ENCODE measurements at regions of chr6 and their contacts with region 1.

Region 1: DNA sequence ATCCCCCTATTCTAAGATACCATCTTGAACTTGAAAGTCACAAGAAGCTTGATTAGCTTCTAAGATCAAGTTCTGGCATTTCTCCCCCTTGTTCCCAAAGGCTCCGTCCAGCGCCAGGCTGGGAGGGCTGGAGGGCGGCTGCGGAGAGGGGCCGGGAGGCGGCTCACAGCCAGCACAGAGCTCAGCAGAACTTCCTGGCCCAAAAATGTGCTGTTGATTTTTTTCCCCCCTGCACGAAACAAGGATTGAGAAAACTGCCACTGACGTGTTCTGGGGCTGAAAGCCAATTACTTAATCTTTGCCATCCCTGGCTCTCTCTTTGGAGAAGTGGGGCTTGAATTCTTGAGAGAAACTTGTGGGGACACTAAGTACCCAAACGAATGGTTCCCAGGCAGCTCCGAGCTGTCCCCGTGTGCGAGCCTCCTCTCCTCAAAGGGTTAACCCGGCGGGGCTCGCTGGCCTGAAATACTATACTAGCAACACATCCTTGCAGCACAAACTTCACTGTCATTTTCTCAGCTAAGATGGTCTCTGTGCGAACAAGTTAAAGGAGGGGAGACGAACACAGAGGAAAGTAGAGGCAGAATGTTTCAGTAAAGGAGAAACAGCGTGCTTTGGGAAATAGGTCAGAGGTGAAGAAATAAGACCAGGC is 452 bp downstream of the TRAF3IP2 start:
- DNase-seq: peak; percentile 58
- H3K4me3 ChIP-seq: peak overlapping the region; percentile 45 to 52
- H3K27ac ChIP-seq: peak overlapping the region; percentile 88 to 90
- H3K4me1 ChIP-seq: peaks cover 28% of the 10 kb centered on the region
- H3K27me3 ChIP-seq: no peaks in the 10 kb centered on the region
- CTCF ChIP-seq: no peak
- POLR2A ChIP-seq: peak; percentile 16

Region 2: GRCh38 chr6:111552241-111552744 is 52.9 kb before region 1 on chr6:
- intact Hi-C with region 1: loop called (anchors 2 kb)
- DNase-seq: peak; percentile 72
- H3K4me3 ChIP-seq: no peak overlapping the region
- H3K27ac ChIP-seq: peak overlapping the region; percentile 67 to 68
- H3K4me1 ChIP-seq: peaks cover 6% of the 10 kb centered on the region
- H3K27me3 ChIP-seq: no peaks in the 10 kb centered on the region
- CTCF ChIP-seq: no peak
- POLR2A ChIP-seq: no peak

Region 3: GRCh38 chr6:111565326-111566221 is 39.7 kb before region 1 on chr6:
- intact Hi-C with region 1: loop called (anchors 2 kb)
- DNase-seq: no peak
- H3K4me3 ChIP-seq: no peak overlapping the region
- H3K27ac ChIP-seq: peak overlapping the region; percentile 71
- H3K4me1 ChIP-seq: peaks cover 13% of the 10 kb centered on the region
- H3K27me3 ChIP-seq: no peaks in the 10 kb centered on the region
- CTCF ChIP-seq: peak in 2 of 4 experiments; percentile 24 to 32
- POLR2A ChIP-seq: no peak

Region 4: DNA sequence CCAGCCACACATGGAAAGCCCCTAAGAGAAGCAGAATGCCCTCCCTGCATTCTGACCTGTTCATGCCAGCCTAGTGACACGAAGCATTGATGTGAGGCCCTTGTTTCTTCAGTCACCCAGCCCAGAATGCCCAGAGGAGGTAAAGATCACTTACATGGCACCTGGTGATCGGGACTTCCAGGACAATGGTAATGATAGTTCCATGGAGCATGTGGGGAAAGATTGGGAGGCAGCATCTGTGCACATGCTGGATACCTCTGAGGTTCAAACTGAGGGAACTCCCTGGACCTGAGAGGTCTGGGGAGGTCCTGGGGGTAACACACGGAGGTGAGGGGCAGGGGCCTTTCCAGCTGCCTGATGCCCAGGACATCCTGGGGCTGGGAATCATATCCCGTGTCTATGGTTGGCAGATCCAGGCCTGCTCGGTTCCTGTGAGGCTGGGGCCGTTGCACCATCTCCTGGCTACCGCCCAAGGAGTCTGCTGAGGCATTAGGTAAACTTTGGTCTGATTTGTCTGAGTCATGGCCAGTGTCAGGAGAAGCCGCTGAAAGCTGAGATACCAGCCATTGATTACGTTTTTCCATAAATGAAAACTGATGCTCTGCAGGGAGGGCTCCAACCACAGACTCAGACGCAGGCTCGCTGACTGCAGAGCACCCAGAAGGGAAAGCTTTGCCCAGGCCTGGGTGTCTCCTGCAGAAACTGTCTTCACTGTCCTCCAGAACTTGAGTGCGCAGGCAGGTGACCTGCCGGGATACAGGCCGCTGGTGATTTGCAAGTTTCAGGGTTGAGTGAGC is 13.9 kb before region 1 on chr6:
- intact Hi-C with region 1: loop called (anchors 2 kb)
- DNase-seq: peak; percentile 97
- H3K4me3 ChIP-seq: no peak overlapping the region
- H3K27ac ChIP-seq: peak overlapping the region; percentile 64 to 69
- H3K4me1 ChIP-seq: peaks cover 15% of the 10 kb centered on the region
- H3K27me3 ChIP-seq: no peaks in the 10 kb centered on the region
- CTCF ChIP-seq: no peak
- POLR2A ChIP-seq: no peak

Measured in prostate gland (tissue), 2 donors.